ENCODE measurements at regions of chr1 and their contacts with region 1.

Region 1: GRCh38 chr1:43414634-43415223 is 25.0 kb downstream of the SZT2 start:
- DNase-seq: peak; percentile 62 to 78 (median 68)
- ATAC-seq: peak; percentile 82
- H3K4me3 ChIP-seq: no peak overlapping the region
- H3K27ac ChIP-seq: no peak overlapping the region
- H3K4me1 ChIP-seq: no peaks in the 10 kb centered on the region
- H3K27me3 ChIP-seq: no peaks in the 10 kb centered on the region
- CTCF ChIP-seq: peak; percentile 42 to 73 (median 66)
- POLR2A ChIP-seq: no peak

Region 2: DNA sequence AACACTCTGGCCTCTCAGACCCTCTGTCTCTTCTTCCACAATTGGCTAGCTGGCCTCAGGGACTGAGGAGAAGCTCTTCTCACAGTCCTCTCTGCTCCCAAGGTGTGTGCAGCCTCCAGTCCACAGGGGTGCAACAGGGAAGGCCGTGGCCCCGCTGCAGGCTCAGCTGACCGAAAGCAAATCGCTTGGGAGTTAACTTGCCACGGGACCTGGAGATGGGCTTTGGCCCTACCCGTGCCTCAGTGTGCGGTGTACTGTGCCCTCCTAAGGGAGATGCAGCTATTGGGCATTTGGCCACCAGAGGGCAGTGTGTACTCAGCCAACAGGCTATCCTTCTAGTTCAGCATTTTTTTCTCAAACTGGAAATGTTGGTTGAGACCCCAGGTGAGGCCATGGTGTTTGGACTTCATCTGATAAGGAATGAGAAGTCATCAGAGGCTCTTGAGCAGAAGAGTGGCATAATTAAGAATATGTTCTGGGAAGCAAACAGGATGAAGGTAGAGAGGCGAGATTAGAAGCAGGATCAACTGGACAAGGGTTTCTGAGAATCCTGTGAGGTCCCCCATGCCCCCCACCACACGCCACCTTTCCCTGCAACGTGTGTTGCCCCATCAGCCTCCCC is 187.5 kb before region 1 on chr1:
- intact Hi-C with region 1: loop called (anchors 5 kb)
- DNase-seq: peak; percentile 80 to 91 (median 85)
- ATAC-seq: peak; percentile 84
- H3K4me3 ChIP-seq: no peak overlapping the region
- H3K27ac ChIP-seq: no peak overlapping the region
- H3K4me1 ChIP-seq: peaks cover 5% of the 10 kb centered on the region
- H3K27me3 ChIP-seq: no peaks in the 10 kb centered on the region
- CTCF ChIP-seq: peak; percentile 89 to 94 (median 90)
- POLR2A ChIP-seq: no peak

Region 3: DNA sequence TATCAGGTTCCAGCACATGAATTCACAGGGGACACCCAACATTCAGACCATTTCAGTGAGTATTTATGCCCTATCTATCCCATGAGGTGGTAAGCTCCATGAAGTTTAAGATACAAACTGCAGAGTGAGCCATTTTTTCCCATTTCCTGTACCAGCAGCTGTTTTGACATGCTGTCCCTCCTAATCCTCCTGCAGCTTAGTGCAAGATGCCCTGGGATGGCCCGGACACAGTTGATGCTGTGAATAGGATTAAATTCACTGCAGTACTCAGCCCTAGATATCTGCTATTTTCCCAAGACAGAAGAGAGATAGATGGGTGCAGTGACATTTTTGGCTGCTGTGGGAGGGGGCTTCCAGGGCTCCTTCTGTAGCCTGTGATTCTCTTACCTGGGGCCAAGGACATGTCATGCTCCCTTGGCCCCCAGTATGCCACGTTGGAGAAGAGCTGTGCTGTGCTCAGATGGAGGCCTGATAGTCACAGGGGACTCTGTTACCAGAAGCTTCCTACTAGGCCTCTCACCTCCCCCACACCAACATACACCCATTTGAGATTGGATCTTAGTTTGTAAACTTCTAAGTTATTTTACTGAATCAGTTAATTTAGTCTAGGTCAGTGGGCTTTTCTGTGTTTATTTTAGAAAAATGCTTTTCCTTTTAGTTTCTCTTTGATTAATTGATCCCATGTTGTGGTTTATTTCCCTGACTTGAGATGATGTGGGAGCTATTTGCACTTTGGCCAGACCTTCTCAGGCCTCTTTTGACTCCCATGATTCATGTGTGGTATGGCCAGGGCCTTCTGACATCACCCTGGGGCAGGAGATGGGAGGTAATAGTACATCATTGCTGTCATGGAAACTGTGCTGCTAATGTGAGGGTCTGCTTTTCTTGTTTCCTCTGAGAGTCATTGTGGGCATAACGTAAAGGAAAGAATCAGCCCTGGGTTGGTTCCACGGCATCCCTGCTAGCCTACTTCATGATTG is 385.2 kb after region 1 on chr1:
- intact Hi-C with region 1: no loop called
- DNase-seq: no peak
- ATAC-seq: no peak
- H3K4me3 ChIP-seq: no peak overlapping the region
- H3K27ac ChIP-seq: no peak overlapping the region
- H3K4me1 ChIP-seq: no peaks in the 10 kb centered on the region
- H3K27me3 ChIP-seq: no peaks in the 10 kb centered on the region
- CTCF ChIP-seq: no peak
- POLR2A ChIP-seq: no peak